A549 (cell line): ENCODE measurements at regions of chr11 and their contacts with region 1.

Region 1: GRCh38 chr11:12281571-12282478 is 95.5 kb upstream of the PARVA start:
- DNase-seq: peak; percentile 77 to 89
- ATAC-seq: peak; percentile 57 to 83; a peak in 5 of 6 replicates
- H3K4me3 ChIP-seq: no peak overlapping the region
- H3K27ac ChIP-seq: peak overlapping the region; percentile 58 to 80
- H3K4me1 ChIP-seq: peaks cover 38% of the 10 kb centered on the region
- CTCF ChIP-seq: peak; percentile 96
- EP300 ChIP-seq: no peak
- POLR2A ChIP-seq: no peak
- RAD21 ChIP-seq: peak; percentile 99 to 100

Region 2: DNA sequence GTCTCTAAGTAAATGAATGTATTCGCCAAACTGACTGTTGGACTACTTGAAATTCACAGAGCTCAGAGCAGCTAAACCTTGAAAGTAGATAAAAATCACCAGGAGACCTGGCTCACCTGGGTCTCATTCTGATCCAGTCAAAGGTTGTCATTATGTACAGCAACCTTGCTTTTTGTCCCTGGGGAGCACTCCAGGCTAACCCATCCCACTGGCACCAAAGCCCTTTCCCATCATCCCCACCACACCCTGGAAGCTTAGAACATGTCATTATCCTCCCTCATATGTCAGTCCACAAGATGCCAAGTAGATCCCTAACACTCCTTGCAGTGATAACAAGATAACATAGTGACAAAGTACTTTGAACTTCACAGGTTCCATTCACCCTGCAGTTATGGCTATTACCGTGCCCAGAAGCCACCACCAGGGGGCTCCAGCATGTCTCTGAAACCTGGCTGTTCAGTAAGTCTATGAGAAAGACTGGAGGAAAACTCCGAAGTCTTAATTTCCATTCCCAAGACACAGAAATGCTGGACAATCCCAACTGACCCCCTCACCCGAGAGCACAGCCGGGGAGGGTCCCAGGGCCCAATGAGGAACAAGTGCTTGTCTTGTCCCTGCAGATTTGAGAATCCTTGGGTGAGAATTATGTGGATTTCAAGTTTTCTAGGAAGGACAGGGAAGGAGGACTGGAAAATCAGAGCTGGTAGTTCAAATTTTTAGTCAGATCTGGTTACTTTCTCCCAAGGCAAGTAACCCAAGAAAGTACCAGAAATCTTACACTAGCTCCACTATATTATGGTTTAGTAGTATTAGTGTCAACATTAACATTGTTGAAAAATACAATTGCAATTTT is 483.0 kb before region 1 on chr11:
- CTCF ChIA-PET with region 1: interaction called, 15 read pairs
- POLR2A ChIA-PET with region 1: no interaction called
- DNase-seq: peak; percentile 77 to 78
- ATAC-seq: peak; percentile 96 to 99
- H3K4me3 ChIP-seq: no peak overlapping the region
- H3K27ac ChIP-seq: peak overlapping the region; percentile 47 to 73; a peak in 4 of 6 replicates
- H3K4me1 ChIP-seq: peaks cover 4% of the 10 kb centered on the region; the same call in 2 of the 3 replicates
- CTCF ChIP-seq: peak; percentile 95
- EP300 ChIP-seq: no peak
- POLR2A ChIP-seq: no peak
- RAD21 ChIP-seq: peak; percentile 92

Region 3: DNA sequence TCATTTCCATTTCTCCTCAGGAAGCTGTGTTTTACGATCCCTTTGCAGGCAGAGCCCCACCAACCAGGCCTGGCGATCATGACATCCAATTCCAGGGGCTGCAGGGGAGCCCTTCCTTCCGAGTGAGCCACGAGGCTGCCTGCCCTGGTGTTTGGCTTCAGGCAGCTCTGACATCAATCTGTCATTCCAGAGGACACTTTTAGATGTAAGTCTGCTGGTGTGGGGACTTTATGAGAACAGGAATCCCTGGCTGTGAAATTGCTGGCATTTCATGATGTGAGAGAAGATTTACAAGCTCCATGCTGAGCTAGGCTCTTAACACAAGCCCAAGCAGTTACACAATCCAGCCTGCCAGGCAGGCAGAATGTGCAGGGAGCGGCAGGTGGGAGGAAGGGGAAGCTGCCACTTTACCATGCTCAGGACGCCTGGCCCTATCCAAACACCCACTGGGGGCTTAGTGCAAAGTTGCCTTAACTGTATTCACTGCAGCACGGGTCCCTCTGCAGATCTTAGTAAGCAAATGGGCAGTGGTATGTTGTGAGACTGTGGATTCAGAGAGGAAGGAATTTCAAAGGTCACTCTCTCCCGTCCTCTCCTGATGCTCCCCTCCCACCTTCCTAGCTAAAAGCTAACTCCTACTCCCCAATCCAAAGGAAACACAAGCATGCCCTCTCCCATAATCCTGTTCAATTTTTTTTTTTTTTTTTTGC is 214.9 kb before region 1 on chr11:
- CTCF ChIA-PET with region 1: interaction called, 664 read pairs
- POLR2A ChIA-PET with region 1: no interaction called
- DNase-seq: peak in 1 of 2 experiments; percentile 93
- ATAC-seq: peak; percentile 83 to 84
- H3K4me3 ChIP-seq: peak overlapping the region; percentile 8; the same call in 1 of the 3 replicates
- H3K27ac ChIP-seq: peak overlapping the region; percentile 97
- H3K4me1 ChIP-seq: peaks cover 66% of the 10 kb centered on the region
- CTCF ChIP-seq: no peak
- EP300 ChIP-seq: peak; percentile 51 to 79; a peak in 3 of 5 replicates
- POLR2A ChIP-seq: no peak
- RAD21 ChIP-seq: no peak

Region 4: DNA sequence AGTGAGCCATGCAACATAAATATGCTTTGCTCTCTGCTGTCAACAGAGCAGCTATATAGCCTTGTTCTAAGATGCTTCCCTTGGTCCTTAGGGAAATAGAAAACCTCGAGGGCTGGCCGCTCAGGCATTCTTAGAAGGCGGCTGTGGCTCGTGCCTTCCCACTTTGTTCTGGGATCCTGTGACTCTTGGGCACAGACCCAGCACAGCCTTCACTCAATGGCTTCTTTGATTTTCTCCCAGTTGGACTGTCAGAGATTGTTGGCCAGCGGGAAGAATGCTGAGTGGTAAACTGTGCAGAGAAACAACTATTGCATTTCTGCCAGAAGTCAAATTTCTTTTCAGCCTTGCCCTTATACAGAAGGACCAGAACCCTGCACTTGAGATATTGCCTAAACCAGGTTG is 181.0 kb before region 1 on chr11:
- CTCF ChIA-PET with region 1: interaction called, 12 read pairs
- POLR2A ChIA-PET with region 1: no interaction called
- DNase-seq: no peak
- ATAC-seq: no peak
- H3K4me3 ChIP-seq: no peak overlapping the region
- H3K27ac ChIP-seq: peak overlapping the region in 1 of 2 experiments; percentile 51; a peak in 2 of 6 replicates
- H3K4me1 ChIP-seq: peaks cover 12% of the 10 kb centered on the region
- CTCF ChIP-seq: no peak
- EP300 ChIP-seq: no peak
- POLR2A ChIP-seq: no peak
- RAD21 ChIP-seq: no peak

Region 5: GRCh38 chr11:12245549-12246016 is 36.2 kb before region 1 on chr11:
- CTCF ChIA-PET with region 1: interaction called, 11 read pairs
- POLR2A ChIA-PET with region 1: no interaction called
- DNase-seq: no peak
- ATAC-seq: peak in 1 of 2 experiments; percentile 17; a peak in 1 of 6 replicates
- H3K4me3 ChIP-seq: no peak overlapping the region
- H3K27ac ChIP-seq: no peak overlapping the region
- H3K4me1 ChIP-seq: peaks cover 10% of the 10 kb centered on the region; the same call in 1 of the 3 replicates
- CTCF ChIP-seq: no peak
- EP300 ChIP-seq: no peak
- POLR2A ChIP-seq: no peak
- RAD21 ChIP-seq: no peak

Region 6: GRCh38 chr11:12263141-12263693 is 18.6 kb before region 1 on chr11:
- CTCF ChIA-PET with region 1: interaction called, 15 read pairs
- POLR2A ChIA-PET with region 1: no interaction called
- DNase-seq: no peak
- ATAC-seq: no peak; a peak in 1 of 6 replicates
- H3K4me3 ChIP-seq: no peak overlapping the region
- H3K27ac ChIP-seq: no peak overlapping the region
- H3K4me1 ChIP-seq: peaks cover 5% of the 10 kb centered on the region
- CTCF ChIP-seq: no peak
- EP300 ChIP-seq: no peak
- POLR2A ChIP-seq: no peak
- RAD21 ChIP-seq: no peak

Region 7: DNA sequence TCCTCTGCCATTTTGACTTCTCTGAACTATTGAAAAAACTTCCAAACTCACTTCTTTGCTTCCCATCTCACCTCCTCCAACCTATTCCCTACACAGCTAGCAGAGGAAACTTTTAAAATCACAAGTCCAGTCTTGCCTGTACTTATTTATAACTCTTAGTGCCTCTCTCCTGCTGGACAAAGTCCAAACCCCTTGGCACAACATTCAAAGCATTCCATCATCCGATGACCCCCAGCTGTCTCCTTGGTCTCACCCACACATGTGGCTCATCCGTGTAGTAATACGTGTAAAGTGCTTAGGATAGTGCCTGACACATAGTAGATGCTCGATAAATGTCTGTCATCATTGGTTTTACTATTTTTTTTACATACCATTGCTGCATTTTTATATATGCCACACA is 196.9 kb after region 1 on chr11:
- CTCF ChIA-PET with region 1: no interaction called
- POLR2A ChIA-PET with region 1: no interaction called
- DNase-seq: no peak
- ATAC-seq: no peak
- H3K4me3 ChIP-seq: no peak overlapping the region
- H3K27ac ChIP-seq: no peak overlapping the region
- H3K4me1 ChIP-seq: no peaks in the 10 kb centered on the region
- CTCF ChIP-seq: no peak
- EP300 ChIP-seq: no peak
- POLR2A ChIP-seq: no peak
- RAD21 ChIP-seq: no peak